ENCODE measurements at regions of chr15 and their contacts with region 1.

Region 1: GRCh38 chr15:74460871-74461846 is at the start of gene UBL7:
- DNase-seq: peak; percentile 92
- ATAC-seq: peak; percentile 95
- H3K4me3 Mint-ChIP-seq: peak within 1 kb of the TSS; percentile 93
- H3K27ac Mint-ChIP-seq: peak within 1 kb of the TSS; percentile 91
- H3K4me1 Mint-ChIP-seq: peaks cover 44% of the 10 kb centered on the region
- H3K27me3 Mint-ChIP-seq: no peaks in the 10 kb centered on the region
- CTCF ChIP-seq: no peak
- total RNA-seq, gene UBL7: 40.6 and 48.8 TPM in 2 replicates

Region 2: DNA sequence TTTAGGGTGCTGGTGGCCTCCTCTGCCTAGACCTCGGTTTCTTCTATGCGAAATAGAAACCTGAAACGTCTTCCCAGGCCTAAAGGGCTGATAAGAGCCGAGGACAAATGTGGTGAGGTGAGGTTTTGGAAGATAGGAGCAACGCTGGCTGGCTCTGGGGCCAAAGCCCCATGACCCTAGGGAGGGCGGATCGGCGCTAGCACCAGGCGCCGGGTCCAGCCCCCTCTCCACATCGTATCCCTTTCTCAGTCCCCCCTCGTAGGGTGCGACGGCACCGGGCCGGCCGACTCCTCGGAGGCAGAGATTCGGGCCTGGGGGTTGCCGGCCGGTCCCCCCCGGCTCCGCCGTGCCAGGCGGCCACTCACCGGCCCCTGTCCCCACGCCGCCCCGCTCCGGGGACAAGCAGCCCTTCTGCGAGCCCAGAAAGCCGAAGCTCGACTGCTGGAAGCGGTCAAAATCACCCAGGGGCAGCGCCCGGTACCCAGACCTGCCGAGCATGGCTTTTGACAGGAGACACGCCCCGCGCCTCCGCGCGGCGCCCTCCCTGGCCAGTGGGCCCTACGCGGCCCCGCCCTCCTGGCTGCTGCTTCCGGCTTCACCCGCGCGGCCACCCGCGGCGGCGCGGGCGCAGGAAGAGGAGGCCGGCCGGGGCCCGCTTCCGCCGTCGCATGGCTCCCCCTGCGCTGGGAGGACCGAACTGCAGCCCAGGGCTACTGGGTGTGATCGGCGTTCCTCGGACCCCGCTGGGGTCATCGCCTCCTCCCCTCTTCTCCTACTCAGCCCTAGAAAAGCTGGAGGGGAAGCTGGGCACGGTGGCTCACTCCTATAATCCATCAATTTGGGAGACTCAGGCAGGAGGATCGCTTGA is 469.2 kb before region 1 on chr15 and contains the start of gene STOML1:
- CTCF ChIA-PET with region 1: no interaction called
- POLR2A ChIA-PET with region 1: no interaction called
- intact Hi-C with region 1: loop called (anchors 5 kb)
- DNase-seq: peak; percentile 98
- ATAC-seq: peak; percentile 77
- H3K4me3 Mint-ChIP-seq: peak within 1 kb of the TSS; percentile 86
- H3K27ac Mint-ChIP-seq: peak within 1 kb of the TSS; percentile 69
- H3K4me1 Mint-ChIP-seq: peaks cover 66% of the 10 kb centered on the region
- H3K27me3 Mint-ChIP-seq: no peaks in the 10 kb centered on the region
- CTCF ChIP-seq: no peak
- total RNA-seq, gene STOML1: 8.9 and 10.6 TPM in 2 replicates

Region 3: GRCh38 chr15:74382004-74382816 is 78.9 kb before region 1 on chr15:
- CTCF ChIA-PET with region 1: interaction called, 18 read pairs
- POLR2A ChIA-PET with region 1: interaction called, 19 read pairs
- intact Hi-C with region 1: loop called (anchors 1 kb)
- DNase-seq: peak; percentile 76
- ATAC-seq: no peak
- H3K4me3 Mint-ChIP-seq: no peak overlapping the region
- H3K27ac Mint-ChIP-seq: peak overlapping the region; percentile 97
- H3K4me1 Mint-ChIP-seq: peaks cover 70% of the 10 kb centered on the region
- H3K27me3 Mint-ChIP-seq: no peaks in the 10 kb centered on the region
- CTCF ChIP-seq: peak; percentile 67

Region 4: GRCh38 chr15:74407055-74407691 is 54.0 kb before region 1 on chr15:
- CTCF ChIA-PET with region 1: no interaction called
- POLR2A ChIA-PET with region 1: interaction called, 11 read pairs
- intact Hi-C with region 1: no loop called
- DNase-seq: no peak
- ATAC-seq: no peak
- H3K4me3 Mint-ChIP-seq: no peak overlapping the region
- H3K27ac Mint-ChIP-seq: peak overlapping the region; percentile 30
- H3K4me1 Mint-ChIP-seq: peaks cover 70% of the 10 kb centered on the region
- H3K27me3 Mint-ChIP-seq: no peaks in the 10 kb centered on the region
- CTCF ChIP-seq: no peak

Region 5: GRCh38 chr15:74438721-74439316 is 22.3 kb before region 1 on chr15:
- CTCF ChIA-PET with region 1: interaction called, 8 read pairs
- POLR2A ChIA-PET with region 1: interaction called, 26 read pairs
- intact Hi-C with region 1: loop called (anchors 2 kb)
- DNase-seq: peak; percentile 67
- ATAC-seq: peak; percentile 53
- H3K4me3 Mint-ChIP-seq: peak overlapping the region; percentile 28
- H3K27ac Mint-ChIP-seq: peak overlapping the region; percentile 73
- H3K4me1 Mint-ChIP-seq: peaks cover 40% of the 10 kb centered on the region
- H3K27me3 Mint-ChIP-seq: no peaks in the 10 kb centered on the region
- CTCF ChIP-seq: peak; percentile 54

Region 6: GRCh38 chr15:74545880-74546656 is 84.9 kb after region 1 on chr15:
- CTCF ChIA-PET with region 1: no interaction called
- POLR2A ChIA-PET with region 1: interaction called, 11 read pairs
- intact Hi-C with region 1: loop called (anchors 1 kb)
- DNase-seq: peak; percentile 64
- ATAC-seq: peak; percentile 36
- H3K4me3 Mint-ChIP-seq: peak overlapping the region; percentile 38
- H3K27ac Mint-ChIP-seq: peak overlapping the region; percentile 70
- H3K4me1 Mint-ChIP-seq: peaks cover 56% of the 10 kb centered on the region
- H3K27me3 Mint-ChIP-seq: no peaks in the 10 kb centered on the region
- CTCF ChIP-seq: no peak

Region 7: DNA sequence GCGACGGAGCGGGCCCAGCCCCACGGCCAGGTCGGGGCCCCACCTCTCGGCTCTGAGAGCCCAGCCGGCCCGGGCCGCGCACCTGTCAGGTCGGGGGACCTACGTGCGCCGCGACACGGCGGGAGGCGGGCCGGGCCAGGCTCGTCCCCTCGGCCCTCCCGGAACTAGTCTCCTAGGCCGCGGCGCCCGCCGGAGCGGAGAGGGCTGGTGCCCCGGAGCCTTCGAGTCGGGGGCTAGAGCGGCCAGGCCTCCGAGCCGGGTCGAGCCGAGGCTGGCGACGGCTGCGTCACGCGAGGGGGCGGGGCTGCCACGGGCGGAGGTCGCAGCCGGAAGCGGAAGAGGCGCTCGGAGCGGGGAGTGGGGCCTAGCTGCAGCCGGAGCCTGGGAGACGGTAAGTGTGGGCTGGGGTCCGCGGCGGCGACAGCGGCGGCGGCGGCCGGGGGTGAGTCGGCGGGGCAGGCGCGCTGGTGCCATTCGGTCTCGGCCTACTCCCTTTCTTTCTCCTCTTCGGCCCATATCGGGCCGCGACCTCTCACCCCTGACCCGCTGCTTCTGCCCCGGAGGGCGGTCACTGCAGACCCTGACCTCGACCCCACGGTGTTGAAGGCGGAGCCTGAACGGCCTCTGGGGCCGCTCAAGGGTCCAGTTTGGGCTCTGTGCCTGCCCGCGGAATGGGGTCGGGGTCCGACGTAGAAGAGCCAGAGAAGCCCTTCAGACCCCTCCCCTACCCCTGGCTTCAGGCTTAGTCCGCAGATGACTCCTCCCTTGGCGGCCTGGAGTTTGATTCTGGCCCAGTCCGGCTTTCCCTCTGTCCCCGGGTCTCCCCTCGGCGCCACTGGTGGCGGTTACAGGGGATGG is 154.6 kb after region 1 on chr15 and contains the start of gene CLK3:
- CTCF ChIA-PET with region 1: interaction called, 3 read pairs
- POLR2A ChIA-PET with region 1: interaction called, 8 read pairs
- intact Hi-C with region 1: loop called (anchors 1 kb)
- DNase-seq: peak; percentile 99
- ATAC-seq: peak; percentile 83
- H3K4me3 Mint-ChIP-seq: peak within 1 kb of the TSS; percentile 89
- H3K27ac Mint-ChIP-seq: peak within 1 kb of the TSS; percentile 95
- H3K4me1 Mint-ChIP-seq: peaks cover 35% of the 10 kb centered on the region
- H3K27me3 Mint-ChIP-seq: no peaks in the 10 kb centered on the region
- CTCF ChIP-seq: no peak
- total RNA-seq, gene CLK3: 100 and 116 TPM in 2 replicates